GM12878 (cell line): ENCODE measurements at regions of chr1 and their contacts with region 1.

Region 1: GRCh38 chr1:49048188-49048587 is 271.5 kb upstream of the BEND5 start:
- DNase-seq: no peak
- ATAC-seq: no peak
- H3K4me3 ChIP-seq: no peak overlapping the region
- H3K27ac ChIP-seq: no peak overlapping the region
- H3K4me1 ChIP-seq: no peaks in the 10 kb centered on the region
- H3K27me3 ChIP-seq: no peaks in the 10 kb centered on the region
- CTCF ChIP-seq: no peak
- EP300 ChIP-seq: no peak
- POLR2A ChIP-seq: no peak
- RAD21 ChIP-seq: no peak

Region 2: DNA sequence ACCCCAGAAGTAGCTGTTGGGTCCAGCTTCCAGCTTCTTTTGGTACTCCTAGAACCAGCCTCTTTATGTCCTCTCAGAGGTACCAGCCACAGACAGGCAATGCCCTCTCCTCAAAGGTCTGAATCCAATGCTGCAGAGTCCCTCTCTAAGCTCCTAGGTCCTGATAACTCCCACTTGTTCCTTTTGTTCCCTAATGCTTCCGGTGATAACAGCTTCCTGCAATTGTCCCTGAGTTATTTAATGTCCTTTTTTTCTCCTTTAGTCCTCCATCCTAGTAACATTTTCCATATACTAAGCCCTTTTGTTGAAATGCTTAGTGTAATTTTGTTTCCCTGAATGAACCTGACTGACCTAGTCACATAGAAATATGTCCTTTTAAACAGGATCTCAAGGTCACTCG is 69.8 kb before region 1 on chr1:
- CTCF ChIA-PET with region 1: no interaction called
- POLR2A ChIA-PET with region 1: no interaction called
- RAD21 ChIA-PET with region 1: no interaction called
- SMC1A ChIA-PET with region 1: no interaction called
- in situ Hi-C with region 1: no loop called
- intact Hi-C with region 1: no loop called
- DNase-seq: no peak
- ATAC-seq: no peak
- H3K4me3 ChIP-seq: no peak overlapping the region
- H3K27ac ChIP-seq: no peak overlapping the region
- H3K4me1 ChIP-seq: no peaks in the 10 kb centered on the region
- H3K27me3 ChIP-seq: no peaks in the 10 kb centered on the region
- CTCF ChIP-seq: no peak
- EP300 ChIP-seq: no peak
- POLR2A ChIP-seq: no peak
- RAD21 ChIP-seq: no peak

Region 3: GRCh38 chr1:49036700-49037099 is 11.5 kb before region 1 on chr1:
- CTCF ChIA-PET with region 1: no interaction called
- POLR2A ChIA-PET with region 1: no interaction called
- RAD21 ChIA-PET with region 1: no interaction called
- SMC1A ChIA-PET with region 1: no interaction called
- in situ Hi-C with region 1: no loop called
- intact Hi-C with region 1: no loop called
- DNase-seq: no peak
- ATAC-seq: no peak
- H3K4me3 ChIP-seq: no peak overlapping the region
- H3K27ac ChIP-seq: no peak overlapping the region
- H3K4me1 ChIP-seq: no peaks in the 10 kb centered on the region
- H3K27me3 ChIP-seq: no peaks in the 10 kb centered on the region
- CTCF ChIP-seq: no peak
- EP300 ChIP-seq: no peak
- POLR2A ChIP-seq: no peak
- RAD21 ChIP-seq: 0 out of 2 replicates have a peak, but pooled peaks have one; percentile 10

Region 4: DNA sequence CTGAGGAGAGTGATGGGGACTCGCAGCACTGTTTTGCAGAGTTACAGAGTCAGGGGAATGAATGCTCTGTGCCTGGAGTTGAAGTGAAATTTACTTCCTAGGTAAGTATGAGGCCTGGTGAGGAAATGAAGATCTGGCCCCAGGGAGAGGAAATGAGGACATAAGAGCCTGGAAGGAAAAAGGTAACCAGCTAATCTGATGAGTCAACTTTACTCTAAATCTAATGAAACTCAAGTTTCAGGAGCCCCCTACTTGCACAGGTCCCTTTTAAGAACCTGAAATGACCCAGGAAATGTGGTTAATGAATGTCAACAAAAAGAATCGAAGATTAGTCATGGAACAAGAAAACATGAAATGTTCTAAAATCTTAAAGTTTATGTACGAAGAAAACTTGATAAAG is 376.6 kb after region 1 on chr1:
- CTCF ChIA-PET with region 1: no interaction called
- POLR2A ChIA-PET with region 1: no interaction called
- RAD21 ChIA-PET with region 1: no interaction called
- SMC1A ChIA-PET with region 1: no interaction called
- in situ Hi-C with region 1: no loop called
- intact Hi-C with region 1: loop called (anchors 10 kb)
- DNase-seq: no peak
- ATAC-seq: no peak
- H3K4me3 ChIP-seq: no peak overlapping the region
- H3K27ac ChIP-seq: no peak overlapping the region
- H3K4me1 ChIP-seq: no peaks in the 10 kb centered on the region
- H3K27me3 ChIP-seq: no peaks in the 10 kb centered on the region
- CTCF ChIP-seq: no peak
- EP300 ChIP-seq: no peak
- POLR2A ChIP-seq: no peak
- RAD21 ChIP-seq: no peak